ENCODE measurements at regions of chr11 and their contacts with region 1.

Region 1: GRCh38 chr11:75388386-75389275 is 10.7 kb upstream of the RPS3 start:
- DNase-seq: peak; percentile 80
- H3K4me3 Mint-ChIP-seq: no peak overlapping the region
- H3K27ac Mint-ChIP-seq: no peak overlapping the region
- H3K4me1 Mint-ChIP-seq: peaks cover 12% of the 10 kb centered on the region
- H3K27me3 Mint-ChIP-seq: peaks cover 12% of the 10 kb centered on the region

Region 2: DNA sequence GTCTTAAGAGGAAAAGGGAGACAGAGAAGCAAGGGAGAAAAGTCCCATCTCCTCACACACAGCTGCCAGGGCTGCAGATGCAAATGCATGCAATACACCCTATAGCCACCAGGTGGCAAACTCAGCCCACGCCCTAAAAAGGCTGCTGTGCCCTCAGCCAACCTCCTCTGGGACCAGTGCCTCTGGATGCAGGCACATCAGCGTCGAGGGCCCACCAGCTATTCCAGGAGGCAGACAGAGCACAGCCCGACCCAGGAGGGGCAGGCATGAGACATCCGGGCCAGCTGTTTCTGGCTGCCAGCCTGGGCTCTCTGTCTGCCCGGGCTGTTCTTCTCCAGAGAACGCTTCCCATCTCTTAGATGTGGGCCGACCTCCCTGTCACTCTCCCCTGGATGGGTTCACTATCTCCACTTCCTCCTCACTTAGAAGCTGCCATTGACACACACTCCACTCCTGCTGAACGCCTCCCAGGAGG is 108.4 kb before region 1 on chr11:
- CTCF ChIA-PET with region 1: interaction called, 339 read pairs
- POLR2A ChIA-PET with region 1: interaction called, 13 read pairs
- DNase-seq: peak; percentile 82
- H3K4me3 Mint-ChIP-seq: no peak overlapping the region
- H3K27ac Mint-ChIP-seq: no peak overlapping the region
- H3K4me1 Mint-ChIP-seq: peaks cover 24% of the 10 kb centered on the region
- H3K27me3 Mint-ChIP-seq: no peaks in the 10 kb centered on the region

Region 3: DNA sequence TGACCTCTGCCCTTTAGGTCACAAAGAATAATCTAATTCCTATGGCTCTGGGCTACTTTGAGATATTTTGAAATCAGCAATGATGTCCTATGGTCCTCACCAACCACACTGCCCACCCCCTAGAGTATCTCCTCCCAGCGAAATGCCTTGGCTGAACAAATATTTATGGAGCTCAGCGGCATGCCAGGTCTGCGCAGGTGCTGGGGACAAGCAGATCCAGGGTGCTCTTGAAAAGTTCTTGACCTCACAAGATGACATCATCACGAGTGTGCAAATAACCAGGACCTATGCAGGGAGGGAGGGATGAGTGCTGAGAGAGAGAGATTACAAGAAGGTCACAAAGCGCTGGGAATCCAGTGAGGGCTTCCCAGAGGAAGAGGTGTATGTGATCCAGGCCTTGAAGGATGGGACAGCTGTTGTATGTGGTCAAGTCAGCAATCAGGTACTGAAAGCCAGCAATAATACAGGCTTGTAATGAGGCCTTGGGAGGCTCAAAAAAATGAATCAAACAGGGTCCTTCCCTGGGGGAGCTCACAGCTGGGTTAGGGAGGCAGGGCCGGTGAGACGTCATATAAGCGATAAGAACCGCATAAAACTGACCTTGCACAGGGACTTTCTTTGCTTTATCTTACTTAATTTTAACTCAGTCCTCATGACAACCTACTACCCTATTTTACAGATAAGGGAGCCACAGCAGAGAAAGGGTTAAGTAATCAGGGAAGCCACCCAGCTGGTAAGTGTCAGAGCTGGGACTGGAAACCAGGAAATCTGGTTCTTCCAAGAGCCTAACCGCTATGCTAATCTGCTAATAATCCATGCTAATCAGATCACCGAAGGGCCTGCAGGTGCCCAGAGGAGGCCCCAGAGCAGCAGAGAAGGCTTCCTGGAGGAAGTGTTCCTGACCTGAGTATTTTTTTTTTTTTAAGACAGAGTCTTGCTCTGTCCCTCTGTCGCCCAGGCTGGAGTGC is 45.4 kb before region 1 on chr11:
- CTCF ChIA-PET with region 1: interaction called, 15 read pairs
- POLR2A ChIA-PET with region 1: interaction called, 3 read pairs
- DNase-seq: no peak
- H3K4me3 Mint-ChIP-seq: no peak overlapping the region
- H3K27ac Mint-ChIP-seq: no peak overlapping the region
- H3K4me1 Mint-ChIP-seq: peaks cover 64% of the 10 kb centered on the region
- H3K27me3 Mint-ChIP-seq: no peaks in the 10 kb centered on the region

Region 4: GRCh38 chr11:75406338-75406777 is 17.7 kb after region 1 on chr11:
- CTCF ChIA-PET with region 1: interaction called, 27 read pairs
- POLR2A ChIA-PET with region 1: interaction called, 3 read pairs
- DNase-seq: no peak
- H3K4me3 Mint-ChIP-seq: no peak overlapping the region
- H3K27ac Mint-ChIP-seq: no peak overlapping the region
- H3K4me1 Mint-ChIP-seq: peaks cover 49% of the 10 kb centered on the region
- H3K27me3 Mint-ChIP-seq: no peaks in the 10 kb centered on the region

Region 5: DNA sequence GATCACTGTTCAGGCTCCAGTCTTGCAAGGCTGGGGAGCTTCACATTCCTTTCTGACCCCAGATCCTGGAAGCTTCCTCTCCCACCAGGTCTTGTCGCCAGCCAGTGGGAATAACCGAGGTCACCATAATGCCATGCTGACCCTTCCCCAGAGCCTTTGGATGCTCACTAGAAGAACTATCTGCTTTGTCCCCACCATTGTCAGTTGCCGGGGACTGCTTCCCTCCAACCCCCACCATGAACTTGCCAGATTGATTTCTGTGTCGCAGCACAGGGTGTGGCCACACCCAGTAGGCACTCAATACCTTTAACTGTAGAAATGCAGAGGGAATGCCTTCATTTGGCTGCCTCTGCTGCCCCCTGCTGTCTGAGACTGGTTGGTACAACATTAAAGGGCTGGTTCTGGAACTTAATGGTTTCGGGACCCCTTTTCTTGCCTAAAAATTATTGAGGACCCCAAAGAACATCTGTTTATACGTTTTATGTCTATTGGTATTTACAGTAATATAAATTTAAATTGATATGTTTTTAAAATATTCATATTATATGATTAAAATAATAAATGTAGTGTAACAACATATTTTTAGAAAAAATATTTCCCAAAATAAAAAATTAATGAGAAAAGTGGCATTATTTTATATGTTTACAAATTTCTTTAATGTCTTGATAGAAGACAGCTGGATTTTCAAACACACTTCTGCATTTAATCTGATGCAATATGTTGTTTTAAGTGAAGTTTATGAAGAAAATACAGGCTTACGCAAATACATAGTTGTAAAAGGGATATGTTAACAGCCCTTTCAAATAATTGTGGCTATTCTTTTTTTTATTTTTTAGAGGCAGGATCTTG is 143.8 kb after region 1 on chr11:
- CTCF ChIA-PET with region 1: interaction called, 94 read pairs
- POLR2A ChIA-PET with region 1: interaction called, 13 read pairs
- DNase-seq: peak; percentile 88
- H3K4me3 Mint-ChIP-seq: peak overlapping the region; percentile 6
- H3K27ac Mint-ChIP-seq: peak overlapping the region; percentile 75
- H3K4me1 Mint-ChIP-seq: peaks cover 70% of the 10 kb centered on the region
- H3K27me3 Mint-ChIP-seq: peaks cover 5% of the 10 kb centered on the region

Region 6: DNA sequence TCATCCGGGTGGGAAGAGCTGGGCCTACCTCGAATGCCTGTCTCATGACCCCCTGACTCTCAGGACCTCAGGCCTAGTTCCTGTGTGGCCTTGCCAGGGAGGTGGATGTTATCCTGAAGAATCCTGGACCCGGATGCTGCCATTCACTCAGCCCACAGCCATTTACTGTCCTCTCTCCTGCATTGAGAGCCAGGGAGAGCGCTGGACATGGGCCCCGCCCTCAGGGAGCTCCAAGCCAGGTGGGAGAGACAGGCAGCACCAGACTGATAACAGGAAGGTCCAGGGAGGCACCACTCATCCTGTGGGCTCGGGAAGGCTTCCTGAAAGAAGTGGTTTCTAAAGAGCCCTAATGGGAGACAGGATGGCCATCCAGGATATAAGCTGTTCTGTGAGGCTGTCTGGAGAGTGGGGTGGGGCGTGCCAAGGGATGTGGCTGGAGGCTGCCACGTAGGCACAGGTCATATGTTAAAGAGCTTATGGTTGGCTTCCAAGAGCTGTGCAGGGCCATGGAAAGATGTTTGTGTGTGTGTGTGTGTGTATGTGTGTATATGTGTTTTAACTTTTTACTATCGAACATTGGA is 182.0 kb after region 1 on chr11:
- CTCF ChIA-PET with region 1: no interaction called
- POLR2A ChIA-PET with region 1: no interaction called
- DNase-seq: no peak
- H3K4me3 Mint-ChIP-seq: no peak overlapping the region
- H3K27ac Mint-ChIP-seq: no peak overlapping the region
- H3K4me1 Mint-ChIP-seq: peaks cover 4% of the 10 kb centered on the region
- H3K27me3 Mint-ChIP-seq: no peaks in the 10 kb centered on the region

Region 7: GRCh38 chr11:75721855-75722668 is 333.4 kb after region 1 on chr11:
- CTCF ChIA-PET with region 1: no interaction called
- POLR2A ChIA-PET with region 1: no interaction called
- DNase-seq: no peak
- H3K4me3 Mint-ChIP-seq: no peak overlapping the region
- H3K27ac Mint-ChIP-seq: no peak overlapping the region
- H3K4me1 Mint-ChIP-seq: peaks cover 2% of the 10 kb centered on the region
- H3K27me3 Mint-ChIP-seq: no peaks in the 10 kb centered on the region

Measured in activated CD4-positive, alpha-beta memory T cell treated with anti-CD3 and anti-CD28 coated beads, Interleukin-2, amount 10 ng/mL, durations not matched to agents 7 days and 5 days (primary cell).